ENCODE measurements at regions of chr5 and their contacts with region 1.

Region 1: GRCh38 chr5:73649926-73650325 is 23.9 kb downstream of the ARHGEF28 start:
- DNase-seq: no peak
- ATAC-seq: no peak
- H3K4me3 ChIP-seq: no peak overlapping the region
- H3K4me3 Mint-ChIP-seq: no peak overlapping the region
- H3K27ac ChIP-seq: no peak overlapping the region
- H3K27ac Mint-ChIP-seq: no peak overlapping the region
- H3K4me1 ChIP-seq: no peaks in the 10 kb centered on the region
- H3K4me1 Mint-ChIP-seq: no peaks in the 10 kb centered on the region
- H3K27me3 ChIP-seq: peaks cover 3% of the 10 kb centered on the region in 2 experiments
- H3K27me3 Mint-ChIP-seq: peaks cover 18 to 23% of the 10 kb centered on the region in 2 donors

Region 2: DNA sequence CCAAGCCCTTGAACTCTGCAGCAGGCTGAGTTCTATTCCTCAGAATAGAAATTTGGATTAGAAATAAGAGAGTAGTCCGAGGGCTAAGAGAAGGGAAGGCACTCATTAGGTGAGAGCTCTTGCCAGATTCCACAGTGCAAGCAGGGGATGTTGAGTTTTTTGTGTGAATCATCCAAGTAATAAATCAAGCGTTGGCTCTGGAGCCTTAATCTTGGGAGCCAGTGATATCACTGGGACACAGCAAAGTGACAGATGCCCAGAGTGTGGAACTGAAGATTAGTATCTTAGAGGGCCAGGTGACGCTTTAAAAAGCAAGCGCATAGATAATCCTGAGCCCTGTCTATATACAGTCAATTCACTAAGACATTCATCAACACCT is 261.6 kb before region 1 on chr5:
- CTCF ChIA-PET with region 1: no interaction called
- POLR2A ChIA-PET with region 1: no interaction called
- DNase-seq: no peak
- ATAC-seq: no peak
- H3K4me3 ChIP-seq: no peak overlapping the region
- H3K4me3 Mint-ChIP-seq: peak overlapping the region in 2 of 3 donors; percentile 7 to 69
- H3K27ac ChIP-seq: no peak overlapping the region
- H3K27ac Mint-ChIP-seq: no peak overlapping the region
- H3K4me1 ChIP-seq: peaks cover 17 to 25% of the 10 kb centered on the region in 2 experiments
- H3K4me1 Mint-ChIP-seq: peaks cover 28 to 35% (median 30%) of the 10 kb centered on the region in 3 donors
- H3K27me3 ChIP-seq: peaks cover 2 to 10% of the 10 kb centered on the region in 2 experiments
- H3K27me3 Mint-ChIP-seq: peaks cover 13 to 16% of the 10 kb centered on the region in 2 donors

Region 3: DNA sequence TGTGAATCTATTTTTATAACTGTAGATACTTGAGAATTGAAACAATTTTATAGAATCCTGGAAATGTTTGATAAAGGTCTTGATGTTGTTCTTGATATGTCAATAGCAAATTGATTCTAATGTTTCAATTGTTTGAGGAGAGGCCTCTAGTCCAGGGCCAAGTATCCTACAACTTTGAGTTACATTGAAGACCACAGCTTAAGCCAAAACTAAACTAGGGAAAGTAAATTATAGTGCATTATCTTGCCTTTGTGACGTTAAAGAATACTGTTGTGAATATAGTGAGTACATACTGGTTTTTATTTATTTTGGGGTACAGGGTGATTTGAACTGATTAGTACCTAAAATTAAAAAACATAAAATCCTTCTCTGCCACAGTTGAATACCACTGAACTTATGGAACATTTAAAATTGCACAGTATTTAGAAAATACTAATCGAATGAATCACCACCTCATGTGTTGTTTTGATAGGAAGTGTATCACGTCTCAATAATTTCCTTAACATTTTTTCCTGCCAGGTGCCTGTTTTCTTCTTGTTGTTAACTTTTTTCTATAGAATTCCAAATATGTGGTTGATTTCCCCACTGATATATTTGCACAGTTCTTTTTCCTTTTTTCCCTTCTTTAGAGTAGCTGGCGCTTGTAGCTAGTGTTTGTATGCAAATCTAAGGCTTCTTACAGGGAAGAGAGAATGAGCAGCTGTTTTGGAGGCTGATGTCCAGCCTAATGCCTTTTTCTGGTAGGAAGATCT is 11.4 kb before region 1 on chr5:
- CTCF ChIA-PET with region 1: no interaction called
- POLR2A ChIA-PET with region 1: no interaction called
- DNase-seq: no peak
- ATAC-seq: no peak
- H3K4me3 ChIP-seq: no peak overlapping the region
- H3K4me3 Mint-ChIP-seq: no peak overlapping the region
- H3K27ac ChIP-seq: no peak overlapping the region
- H3K27ac Mint-ChIP-seq: no peak overlapping the region
- H3K4me1 ChIP-seq: no peaks in the 10 kb centered on the region
- H3K4me1 Mint-ChIP-seq: no peaks in the 10 kb centered on the region
- H3K27me3 ChIP-seq: peaks cover 2 to 3% of the 10 kb centered on the region in 2 experiments
- H3K27me3 Mint-ChIP-seq: peaks cover 4 to 24% of the 10 kb centered on the region in 2 donors

Region 4: GRCh38 chr5:74173251-74173650 is 523.3 kb after region 1 on chr5:
- CTCF ChIA-PET with region 1: interaction called in 1 of 2 experiments, 11 read pairs
- POLR2A ChIA-PET with region 1: no interaction called
- DNase-seq: no peak
- ATAC-seq: no peak
- H3K4me3 ChIP-seq: no peak overlapping the region
- H3K4me3 Mint-ChIP-seq: no peak overlapping the region
- H3K27ac ChIP-seq: no peak overlapping the region
- H3K27ac Mint-ChIP-seq: no peak overlapping the region
- H3K4me1 ChIP-seq: no peaks in the 10 kb centered on the region
- H3K4me1 Mint-ChIP-seq: no peaks in the 10 kb centered on the region
- H3K27me3 ChIP-seq: no peaks in the 10 kb centered on the region
- H3K27me3 Mint-ChIP-seq: peaks cover 8 to 16% of the 10 kb centered on the region in 2 donors

Measured in T-cell (primary cell).